IMR-90 (cell line): ENCODE measurements at regions of chr1 and their contacts with region 1.

Region 1: GRCh38 chr1:98048244-98048643 is 127.4 kb upstream of the DPYD start:
- DNase-seq: peak; percentile 92
- ATAC-seq: peak; percentile 64
- H3K4me3 ChIP-seq: peak overlapping the region; percentile 44
- H3K27ac ChIP-seq: no peak overlapping the region
- H3K4me1 ChIP-seq: peaks cover 6% of the 10 kb centered on the region
- H3K27me3 ChIP-seq: no peaks in the 10 kb centered on the region
- CTCF ChIP-seq: peak; percentile 19; the same call in 1 of the 2 replicates
- POLR2A ChIP-seq: no peak
- RAD21 ChIP-seq: peak; percentile 45

Region 2: DNA sequence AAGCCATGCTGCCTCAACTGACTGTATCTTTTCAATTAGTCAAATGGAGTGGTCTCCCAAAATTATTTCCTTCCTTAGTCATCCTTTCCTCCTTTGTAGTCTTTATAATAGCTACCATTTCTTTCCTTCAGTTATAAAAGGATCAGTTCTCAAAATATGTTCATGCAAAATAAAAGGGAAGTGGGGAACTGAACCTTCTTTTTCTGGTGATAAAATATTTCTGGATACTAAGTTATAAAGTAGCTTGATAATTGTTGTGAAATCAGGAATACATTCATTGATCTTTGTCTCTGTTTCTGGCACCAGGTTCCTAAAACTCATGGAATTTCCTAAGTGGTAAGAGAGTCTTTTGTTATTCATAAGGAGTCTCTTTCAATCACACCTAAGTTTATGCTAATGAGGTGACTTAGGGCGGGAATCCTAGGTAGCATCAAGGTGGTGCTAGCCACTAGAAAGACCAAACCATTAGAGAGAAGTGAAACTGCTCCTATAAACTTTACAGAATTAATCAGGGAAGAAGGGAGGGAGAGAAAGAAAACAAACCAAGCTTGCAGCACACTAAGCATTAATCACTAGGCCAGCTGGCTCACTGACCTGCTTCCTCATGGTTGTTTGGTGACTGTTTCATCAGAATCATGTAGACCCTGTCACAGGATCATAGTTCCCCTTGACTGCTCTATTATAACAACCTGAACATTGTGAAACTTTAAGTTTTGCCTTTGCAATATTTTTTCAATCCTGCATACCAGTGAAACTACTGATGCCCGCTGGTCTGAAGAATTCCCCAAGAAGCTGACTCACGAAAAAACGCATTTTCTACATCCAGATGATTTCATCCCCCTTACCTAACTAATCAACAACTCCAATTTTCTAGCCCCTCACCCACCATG is 1488.3 kb before region 1 on chr1:
- CTCF ChIA-PET with region 1: no interaction called
- POLR2A ChIA-PET with region 1: no interaction called
- dilution Hi-C with region 1: no loop called
- in situ Hi-C with region 1: loop called (anchors 10 kb)
- intact Hi-C with region 1: no loop called
- DNase-seq: peak; percentile 99
- ATAC-seq: peak; percentile 92
- H3K4me3 ChIP-seq: no peak overlapping the region
- H3K27ac ChIP-seq: peak overlapping the region; percentile 77
- H3K4me1 ChIP-seq: peaks cover 3% of the 10 kb centered on the region; the same call in 1 of the 2 replicates
- H3K27me3 ChIP-seq: no peaks in the 10 kb centered on the region
- CTCF ChIP-seq: no peak
- POLR2A ChIP-seq: no peak
- RAD21 ChIP-seq: 0 out of 2 replicates have a peak, but pooled peaks have one; percentile 1

Region 3: GRCh38 chr1:97553971-97554370 is 494.3 kb before region 1 on chr1:
- CTCF ChIA-PET with region 1: no interaction called
- POLR2A ChIA-PET with region 1: no interaction called
- dilution Hi-C with region 1: no loop called
- in situ Hi-C with region 1: no loop called
- intact Hi-C with region 1: loop called (anchors 10 kb)
- DNase-seq: no peak
- ATAC-seq: no peak
- H3K4me3 ChIP-seq: no peak overlapping the region
- H3K27ac ChIP-seq: no peak overlapping the region
- H3K4me1 ChIP-seq: no peaks in the 10 kb centered on the region
- H3K27me3 ChIP-seq: no peaks in the 10 kb centered on the region
- CTCF ChIP-seq: no peak
- POLR2A ChIP-seq: no peak
- RAD21 ChIP-seq: no peak

Region 4: GRCh38 chr1:97920832-97921571 is 127.2 kb before region 1 on chr1 and contains the start of gene DPYD:
- CTCF ChIA-PET with region 1: no interaction called
- POLR2A ChIA-PET with region 1: no interaction called
- dilution Hi-C with region 1: no loop called
- in situ Hi-C with region 1: loop called (anchors 10 kb)
- intact Hi-C with region 1: loop called (anchors 1 kb)
- DNase-seq: peak; percentile 85
- ATAC-seq: peak; percentile 98
- H3K4me3 ChIP-seq: peak within 1 kb of the TSS; percentile 92
- H3K27ac ChIP-seq: peak within 1 kb of the TSS; percentile 81
- H3K4me1 ChIP-seq: 0 out of 2 replicates have a peak, but pooled peaks cover 2% of the 10 kb centered on the region
- H3K27me3 ChIP-seq: no peaks in the 10 kb centered on the region
- CTCF ChIP-seq: no peak
- POLR2A ChIP-seq: peak; percentile 70; the same call in 1 of the 2 replicates
- RAD21 ChIP-seq: no peak
- total RNA-seq, gene DPYD: 47.3 and 58.3 TPM in 2 replicates

Region 5: GRCh38 chr1:98008373-98008772 is 39.9 kb before region 1 on chr1:
- CTCF ChIA-PET with region 1: no interaction called
- POLR2A ChIA-PET with region 1: no interaction called
- dilution Hi-C with region 1: no loop called
- in situ Hi-C with region 1: no loop called
- intact Hi-C with region 1: loop called (anchors 2 kb)
- DNase-seq: no peak
- ATAC-seq: no peak
- H3K4me3 ChIP-seq: no peak overlapping the region
- H3K27ac ChIP-seq: no peak overlapping the region
- H3K4me1 ChIP-seq: peaks cover 2% of the 10 kb centered on the region; the same call in 1 of the 2 replicates
- H3K27me3 ChIP-seq: no peaks in the 10 kb centered on the region
- CTCF ChIP-seq: no peak
- POLR2A ChIP-seq: no peak
- RAD21 ChIP-seq: no peak

Region 6: GRCh38 chr1:98090351-98090750 is 42.1 kb after region 1 on chr1:
- CTCF ChIA-PET with region 1: no interaction called
- POLR2A ChIA-PET with region 1: no interaction called
- dilution Hi-C with region 1: no loop called
- in situ Hi-C with region 1: no loop called
- intact Hi-C with region 1: no loop called
- DNase-seq: peak; percentile 80
- ATAC-seq: no peak
- H3K4me3 ChIP-seq: no peak overlapping the region
- H3K27ac ChIP-seq: no peak overlapping the region
- H3K4me1 ChIP-seq: peaks cover 4% of the 10 kb centered on the region
- H3K27me3 ChIP-seq: no peaks in the 10 kb centered on the region
- CTCF ChIP-seq: no peak
- POLR2A ChIP-seq: no peak
- RAD21 ChIP-seq: no peak